ENCODE measurements at regions of chr9 and their contacts with region 1.

Region 1: DNA sequence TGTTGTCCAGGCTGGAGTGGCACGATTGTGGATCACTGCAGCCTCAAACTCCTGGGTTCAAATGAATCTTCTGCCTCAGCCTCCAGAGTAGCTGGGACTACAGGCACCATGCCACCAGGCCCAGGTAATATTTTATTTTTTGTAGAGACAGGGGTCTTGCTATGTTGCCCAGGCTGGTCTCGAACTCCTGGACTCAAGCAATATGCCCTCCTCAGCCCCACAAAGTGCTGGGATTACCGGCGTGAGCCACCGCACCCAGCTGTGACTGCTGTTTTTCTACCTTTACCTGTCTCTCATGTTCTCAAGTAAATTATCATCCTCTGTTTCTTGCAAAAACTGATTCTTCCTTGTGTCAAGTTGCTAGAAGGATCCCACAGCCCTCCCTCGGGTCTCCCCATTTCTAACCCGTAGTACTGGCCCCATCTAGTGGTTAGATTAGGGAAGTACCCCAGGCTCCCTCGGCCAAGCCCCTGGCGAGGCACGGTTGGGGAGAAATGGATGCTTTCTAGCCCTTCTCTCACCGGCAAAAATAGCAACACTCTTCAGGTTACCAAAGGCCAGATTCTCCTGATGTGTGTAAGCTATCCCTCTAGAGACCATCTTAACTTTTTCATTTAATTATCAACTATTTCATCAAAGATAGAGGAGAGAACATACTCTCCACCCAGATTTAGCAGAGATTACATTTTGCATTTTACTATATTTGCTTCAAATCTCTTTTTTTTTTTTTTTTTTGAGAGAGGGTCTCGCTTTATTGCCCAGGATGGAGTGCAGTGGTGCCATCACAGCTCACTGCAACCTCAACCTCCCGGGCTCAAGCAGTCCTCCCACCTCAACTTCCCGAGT is 19.2 kb upstream of the TOR1B start:
- DNase-seq: peak; percentile 68
- ATAC-seq: peak; percentile 96

Region 2: GRCh38 chr9:129131300-129132145 is 652.2 kb before region 1 on chr9:
- intact Hi-C with region 1: loop called (anchors 5 kb)
- DNase-seq: peak; percentile 88
- ATAC-seq: peak; percentile 92

Region 3: GRCh38 chr9:129401628-129402370 is 381.9 kb before region 1 on chr9:
- intact Hi-C with region 1: no loop called
- DNase-seq: peak; percentile 47
- ATAC-seq: peak; percentile 40

Region 4: DNA sequence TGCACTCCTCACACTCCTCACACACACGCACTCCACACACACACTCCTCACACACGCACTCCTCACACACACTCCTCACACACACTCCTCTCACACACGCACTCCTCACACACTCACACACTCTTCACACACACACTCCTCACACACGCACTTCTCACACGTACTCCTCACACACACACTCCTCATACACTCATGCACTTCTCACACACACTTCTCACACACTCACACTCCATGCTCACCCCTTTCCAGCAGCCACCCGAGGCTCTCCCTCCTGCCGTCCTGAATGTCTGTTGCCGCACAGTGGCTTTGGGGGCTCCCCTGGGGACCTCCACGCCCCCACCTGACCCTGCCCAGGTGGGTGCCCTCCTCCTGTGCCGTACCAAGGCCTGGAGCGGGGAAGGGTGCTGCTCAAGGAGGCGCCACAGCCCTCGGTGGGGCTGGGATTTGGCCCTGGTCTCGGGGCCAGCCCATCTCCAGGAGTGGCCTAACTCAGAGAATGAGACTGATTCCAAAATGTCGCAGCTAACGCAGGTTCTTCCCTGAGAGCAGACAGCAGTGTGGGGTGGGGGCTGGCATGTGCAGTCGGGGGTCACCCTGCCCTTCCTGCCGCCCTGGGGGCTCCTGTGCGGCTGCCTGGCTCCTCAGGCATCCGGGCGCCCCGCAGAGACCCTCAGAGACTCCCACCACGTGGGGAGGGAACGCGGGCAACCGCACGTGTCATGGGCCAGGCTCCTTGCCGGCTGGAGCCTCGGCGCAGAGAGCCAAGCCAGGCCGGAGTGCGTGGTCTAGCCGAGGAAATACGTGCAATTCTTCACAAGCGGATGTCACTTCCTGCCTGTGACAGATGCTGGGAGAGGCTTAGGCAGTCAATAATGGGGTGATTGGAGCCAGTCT is 207.2 kb before region 1 on chr9:
- intact Hi-C with region 1: no loop called
- DNase-seq: peak; percentile 54
- ATAC-seq: no peak

Region 5: GRCh38 chr9:129641746-129642513 is 141.8 kb before region 1 on chr9 and contains the start of gene ASB6:
- intact Hi-C with region 1: loop called (anchors 5 kb)
- DNase-seq: peak; percentile 98
- ATAC-seq: peak; percentile 94
- total RNA-seq, gene ASB6: 7.9 TPM

Region 6: GRCh38 chr9:129737479-129738274 is 46.1 kb before region 1 on chr9:
- intact Hi-C with region 1: loop called (anchors 2 kb)
- DNase-seq: peak; percentile 90
- ATAC-seq: peak; percentile 98

Region 7: GRCh38 chr9:130023144-130023787 is 239.5 kb after region 1 on chr9:
- intact Hi-C with region 1: no loop called
- DNase-seq: no peak
- ATAC-seq: peak; percentile 13